Cardiac septum (tissue), 1 donor: ENCODE measurements at regions of chr2 and their contacts with region 1.

Region 1: GRCh38 chr2:219560037-219560892 is 11.1 kb downstream of the OBSL1 start:
- DNase-seq: no peak

Region 2: GRCh38 chr2:219279517-219280516 is 280.4 kb before region 1 on chr2:
- intact Hi-C with region 1: no loop called
- DNase-seq: peak; percentile 82

Region 3: DNA sequence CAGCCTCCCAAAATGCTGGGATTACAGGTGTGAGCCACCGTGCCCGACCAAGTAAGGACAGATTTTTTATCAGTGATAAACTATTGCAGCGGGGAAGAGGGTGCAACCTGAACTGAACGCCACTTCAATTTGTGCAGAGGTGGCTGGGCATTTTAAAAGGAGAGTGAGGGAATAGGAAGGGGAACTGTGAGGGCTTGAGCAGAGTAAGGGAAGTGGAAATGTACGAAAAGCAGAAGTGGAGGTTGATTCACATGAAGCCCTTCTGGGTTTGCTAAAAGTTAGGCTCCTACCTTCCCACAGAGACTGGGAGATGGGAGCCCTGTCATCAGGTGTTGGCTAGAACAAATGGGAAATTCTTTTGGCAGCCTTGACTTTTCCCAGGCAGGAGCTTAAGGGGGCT is 43.5 kb after region 1 on chr2:
- intact Hi-C with region 1: loop called (anchors 5 kb)
- DNase-seq: no peak